ENCODE measurements at regions of chr3 and their contacts with region 1.

Region 1: GRCh38 chr3:134126153-134126552 is 96.4 kb upstream of the SLCO2A1 start:
- DNase-seq: peak; percentile 16
- H3K4me3 ChIP-seq: no peak overlapping the region
- H3K27ac ChIP-seq: no peak overlapping the region
- H3K4me1 ChIP-seq: no peaks in the 10 kb centered on the region
- H3K27me3 ChIP-seq: no peaks in the 10 kb centered on the region
- CTCF ChIP-seq: peak in 1 of 2 donors; percentile 8
- POLR2A ChIP-seq: no peak

Region 2: GRCh38 chr3:134186391-134186790 is 60.2 kb after region 1 on chr3:
- CTCF ChIA-PET with region 1: interaction called, 3 read pairs
- POLR2A ChIA-PET with region 1: no interaction called
- dilution Hi-C with region 1: no loop called
- intact Hi-C with region 1: loop called (anchors 5 kb)
- DNase-seq: peak; percentile 72
- H3K4me3 ChIP-seq: no peak overlapping the region
- H3K27ac ChIP-seq: peak overlapping the region; percentile 15
- H3K4me1 ChIP-seq: peaks cover 10% of the 10 kb centered on the region
- H3K27me3 ChIP-seq: no peaks in the 10 kb centered on the region
- CTCF ChIP-seq: no peak
- POLR2A ChIP-seq: no peak

Measured in endothelial cell of umbilical vein (primary cell).